WTC11 (cell line): ENCODE measurements at regions of chr10 and their contacts with region 1.

Region 1: DNA sequence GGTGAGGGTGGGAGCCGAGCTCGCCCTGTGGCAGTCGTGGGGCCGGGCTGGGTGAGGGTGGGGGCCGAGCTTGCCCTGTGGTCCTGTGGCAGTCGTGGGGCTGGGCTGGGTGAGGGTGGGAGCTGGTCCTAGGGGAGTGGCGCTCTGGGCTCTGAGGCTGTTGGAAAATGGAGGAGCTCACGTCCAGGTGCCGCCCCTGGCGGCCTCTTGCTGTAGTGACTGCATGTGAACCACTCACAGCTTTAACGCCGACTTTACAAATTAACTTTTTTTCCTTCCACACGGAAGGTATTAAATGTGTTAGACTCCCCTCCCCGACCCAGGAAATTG is 312.6 kb downstream of the WDR37 start:
- DNase-seq: peak; percentile 73
- ATAC-seq: peak; percentile 96
- H3K4me3 Mint-ChIP-seq: no peak overlapping the region
- H3K27ac Mint-ChIP-seq: no peak overlapping the region
- H3K4me1 Mint-ChIP-seq: peaks cover 19% of the 10 kb centered on the region
- H3K27me3 Mint-ChIP-seq: no peaks in the 10 kb centered on the region
- CTCF ChIP-seq: peak; percentile 65

Region 2: GRCh38 chr10:1180836-1181235 is 188.0 kb before region 1 on chr10:
- CTCF ChIA-PET with region 1: interaction called, 17 read pairs
- POLR2A ChIA-PET with region 1: no interaction called
- DNase-seq: no peak
- ATAC-seq: peak; percentile 46; the same call in 1 of the 2 replicates
- H3K4me3 Mint-ChIP-seq: no peak overlapping the region
- H3K27ac Mint-ChIP-seq: no peak overlapping the region
- H3K4me1 Mint-ChIP-seq: peaks cover 11% of the 10 kb centered on the region
- H3K27me3 Mint-ChIP-seq: no peaks in the 10 kb centered on the region; the same call in 1 of the 2 replicates
- CTCF ChIP-seq: no peak

Region 3: GRCh38 chr10:1297566-1298301 is 71.1 kb before region 1 on chr10:
- CTCF ChIA-PET with region 1: interaction called, 49 read pairs
- POLR2A ChIA-PET with region 1: no interaction called
- DNase-seq: peak; percentile 61
- ATAC-seq: peak; percentile 90
- H3K4me3 Mint-ChIP-seq: no peak overlapping the region
- H3K27ac Mint-ChIP-seq: peak overlapping the region; percentile 83; the same call in 1 of the 2 replicates
- H3K4me1 Mint-ChIP-seq: peaks cover 57% of the 10 kb centered on the region
- H3K27me3 Mint-ChIP-seq: peaks cover 3% of the 10 kb centered on the region; the same call in 1 of the 2 replicates
- CTCF ChIP-seq: no peak

Region 4: GRCh38 chr10:1324903-1325302 is 43.9 kb before region 1 on chr10:
- CTCF ChIA-PET with region 1: interaction called, 12 read pairs
- POLR2A ChIA-PET with region 1: no interaction called
- DNase-seq: no peak
- ATAC-seq: no peak
- H3K4me3 Mint-ChIP-seq: no peak overlapping the region
- H3K27ac Mint-ChIP-seq: no peak overlapping the region
- H3K4me1 Mint-ChIP-seq: peaks cover 15% of the 10 kb centered on the region
- H3K27me3 Mint-ChIP-seq: peaks cover 7% of the 10 kb centered on the region
- CTCF ChIP-seq: no peak

Region 5: DNA sequence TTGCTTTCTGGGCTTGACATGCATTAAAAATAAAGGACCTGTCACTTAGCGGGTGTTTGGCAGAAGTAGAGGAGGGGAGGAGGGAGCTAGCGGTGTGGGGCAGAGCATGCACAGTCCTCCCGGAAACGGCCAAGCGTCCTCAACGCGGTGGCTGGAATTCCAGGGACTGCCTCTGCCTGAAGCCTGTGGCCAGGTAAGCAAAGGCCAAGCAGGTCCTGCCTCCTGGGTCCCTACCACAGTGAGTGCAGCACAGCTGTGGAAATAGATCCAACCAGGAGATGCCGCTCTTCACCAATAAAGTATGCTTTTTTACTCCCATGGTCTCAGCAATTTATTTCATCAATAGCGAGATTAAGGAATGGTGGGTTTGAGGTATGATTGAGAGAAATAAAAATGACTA is 10.8 kb after region 1 on chr10:
- CTCF ChIA-PET with region 1: interaction called, 24 read pairs
- POLR2A ChIA-PET with region 1: no interaction called
- DNase-seq: peak; percentile 72
- ATAC-seq: peak; percentile 89
- H3K4me3 Mint-ChIP-seq: no peak overlapping the region
- H3K27ac Mint-ChIP-seq: 0 out of 2 replicates have a peak overlapping the region, but pooled peaks have one; percentile 72
- H3K4me1 Mint-ChIP-seq: peaks cover 43% of the 10 kb centered on the region
- H3K27me3 Mint-ChIP-seq: peaks cover 5% of the 10 kb centered on the region
- CTCF ChIP-seq: no peak

Region 6: DNA sequence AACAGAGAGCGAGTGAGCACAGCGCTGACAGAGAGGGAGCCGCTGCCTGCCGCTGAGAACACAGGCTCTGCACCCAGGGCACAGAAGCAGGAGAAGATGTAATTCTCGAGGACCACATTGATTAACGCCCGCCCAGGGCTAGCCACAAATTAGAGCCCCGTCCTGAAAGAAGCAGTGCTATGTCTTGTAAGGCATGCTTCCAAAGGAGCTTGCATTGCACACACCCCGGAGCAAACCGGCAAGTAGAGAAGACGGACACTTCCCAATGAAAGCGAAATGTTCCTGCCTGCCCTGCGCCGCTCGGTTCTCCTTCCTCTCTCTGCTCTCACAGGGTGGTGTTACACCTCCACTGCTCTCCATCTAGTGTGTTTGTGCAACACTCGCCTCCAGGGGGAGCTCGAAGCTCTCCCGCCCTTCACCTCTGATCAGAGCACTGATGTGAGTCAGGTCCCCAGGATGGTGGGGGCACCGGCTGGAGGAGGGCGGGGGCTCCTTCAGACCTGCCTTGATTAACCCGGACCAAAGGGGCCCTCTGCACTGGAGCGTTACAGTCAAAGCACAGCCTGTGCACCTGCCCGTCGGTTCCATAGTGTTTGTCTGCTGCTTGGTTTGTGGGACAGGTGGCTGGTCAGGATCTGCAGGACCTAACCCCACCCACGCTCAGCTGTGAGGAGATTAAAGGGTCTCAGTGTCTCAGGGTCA is 52.0 kb after region 1 on chr10:
- CTCF ChIA-PET with region 1: interaction called, 30 read pairs
- POLR2A ChIA-PET with region 1: no interaction called
- DNase-seq: peak; percentile 94
- ATAC-seq: peak; percentile 99
- H3K4me3 Mint-ChIP-seq: peak overlapping the region; percentile 77
- H3K27ac Mint-ChIP-seq: no peak overlapping the region
- H3K4me1 Mint-ChIP-seq: peaks cover 29% of the 10 kb centered on the region
- H3K27me3 Mint-ChIP-seq: peaks cover 45% of the 10 kb centered on the region
- CTCF ChIP-seq: peak; percentile 77